ENCODE measurements at regions of chr1 and their contacts with region 1.

Region 1: DNA sequence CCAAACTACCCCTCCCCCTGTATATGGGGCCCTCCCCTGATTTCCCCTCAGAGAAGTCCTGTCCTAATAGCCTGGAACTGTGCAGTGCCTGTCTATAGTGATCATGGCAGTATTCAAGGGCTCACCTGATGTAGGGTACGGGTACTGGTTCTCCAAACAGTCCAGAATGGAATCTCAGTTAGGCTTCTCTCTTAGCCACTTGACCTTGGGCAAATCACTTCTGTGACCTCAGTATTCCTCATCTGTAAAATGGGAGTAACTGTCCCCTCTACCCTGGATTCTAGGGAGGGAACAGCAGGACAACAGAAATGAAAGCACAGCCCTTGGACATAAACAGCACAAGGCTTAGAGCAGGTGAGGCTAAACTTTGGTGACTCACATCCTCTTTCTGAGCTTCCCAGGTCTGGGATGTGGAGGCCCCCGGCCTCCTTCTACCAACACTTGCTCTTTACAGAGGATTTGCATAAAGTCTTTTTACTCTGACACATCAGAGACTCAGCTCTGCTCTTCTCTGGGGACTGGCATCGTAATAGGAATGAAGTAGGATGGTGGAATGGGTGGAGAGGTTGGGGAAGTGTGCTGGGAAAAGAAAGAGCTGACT is 20.0 kb upstream of the PDZK1IP1 start:
- DNase-seq: no peak
- H3K4me3 ChIP-seq: no peak overlapping the region
- H3K27ac ChIP-seq: no peak overlapping the region
- H3K4me1 ChIP-seq: no peaks in the 10 kb centered on the region
- H3K27me3 ChIP-seq: no peaks in the 10 kb centered on the region
- CTCF ChIP-seq: no peak

Region 2: GRCh38 chr1:47325530-47325929 is 115.7 kb after region 1 on chr1:
- CTCF ChIA-PET with region 1: no interaction called
- POLR2A ChIA-PET with region 1: interaction called, 12 read pairs
- intact Hi-C with region 1: no loop called
- DNase-seq: peak in 1 of 2 experiments; percentile 95
- H3K4me3 ChIP-seq: no peak overlapping the region
- H3K27ac ChIP-seq: peak overlapping the region; percentile 88
- H3K4me1 ChIP-seq: peaks cover 8% of the 10 kb centered on the region
- H3K27me3 ChIP-seq: no peaks in the 10 kb centered on the region
- CTCF ChIP-seq: no peak